PC-9 (cell line): ENCODE measurements at regions of chr12 and their contacts with region 1.

Region 1: GRCh38 chr12:52522346-52523011 is 2.3 kb upstream of the KRT5 start:
- DNase-seq: peak; percentile 78 to 87
- H3K4me3 ChIP-seq: peak overlapping the region; percentile 31; the same call in 1 of the 2 replicates
- H3K27ac ChIP-seq: peak overlapping the region; percentile 96
- H3K4me1 ChIP-seq: peaks cover 66% of the 10 kb centered on the region
- H3K27me3 ChIP-seq: no peaks in the 10 kb centered on the region
- CTCF ChIP-seq: no peak

Region 2: GRCh38 chr12:52390739-52391617 is 131.5 kb before region 1 on chr12:
- CTCF ChIA-PET with region 1: interaction called, 3 read pairs
- POLR2A ChIA-PET with region 1: no interaction called
- intact Hi-C with region 1: loop called (anchors 5 kb)
- DNase-seq: peak in 1 of 2 experiments; percentile 31
- H3K4me3 ChIP-seq: no peak overlapping the region
- H3K27ac ChIP-seq: no peak overlapping the region
- H3K4me1 ChIP-seq: no peaks in the 10 kb centered on the region
- H3K27me3 ChIP-seq: no peaks in the 10 kb centered on the region
- CTCF ChIP-seq: peak; percentile 83

Region 3: GRCh38 chr12:52442600-52443061 is 79.8 kb before region 1 on chr12:
- CTCF ChIA-PET with region 1: interaction called, 11 read pairs
- POLR2A ChIA-PET with region 1: interaction called, 4 read pairs
- intact Hi-C with region 1: loop called (anchors 1 kb)
- DNase-seq: peak; percentile 82 to 92
- H3K4me3 ChIP-seq: peak overlapping the region; percentile 17; the same call in 1 of the 2 replicates
- H3K27ac ChIP-seq: peak overlapping the region; percentile 97
- H3K4me1 ChIP-seq: peaks cover 74% of the 10 kb centered on the region
- H3K27me3 ChIP-seq: no peaks in the 10 kb centered on the region
- CTCF ChIP-seq: no peak; the same call in 1 of the 2 replicates

Region 4: GRCh38 chr12:52495389-52495788 is 27.1 kb before region 1 on chr12:
- CTCF ChIA-PET with region 1: interaction called, 4 read pairs
- POLR2A ChIA-PET with region 1: interaction called, 4 read pairs
- intact Hi-C with region 1: loop called (anchors 1 kb)
- DNase-seq: peak in 1 of 2 experiments; percentile 51
- H3K4me3 ChIP-seq: no peak overlapping the region
- H3K27ac ChIP-seq: no peak overlapping the region
- H3K4me1 ChIP-seq: peaks cover 41% of the 10 kb centered on the region
- H3K27me3 ChIP-seq: no peaks in the 10 kb centered on the region
- CTCF ChIP-seq: no peak

Region 5: GRCh38 chr12:52672321-52672933 is 149.9 kb after region 1 on chr12:
- CTCF ChIA-PET with region 1: no interaction called
- POLR2A ChIA-PET with region 1: interaction called, 13 read pairs
- intact Hi-C with region 1: loop called (anchors 5 kb)
- DNase-seq: peak; percentile 55 to 98
- H3K4me3 ChIP-seq: no peak overlapping the region
- H3K27ac ChIP-seq: peak overlapping the region; percentile 86
- H3K4me1 ChIP-seq: peaks cover 35% of the 10 kb centered on the region
- H3K27me3 ChIP-seq: no peaks in the 10 kb centered on the region
- CTCF ChIP-seq: no peak